ENCODE measurements at regions of chr5 and their contacts with region 1.

Region 1: DNA sequence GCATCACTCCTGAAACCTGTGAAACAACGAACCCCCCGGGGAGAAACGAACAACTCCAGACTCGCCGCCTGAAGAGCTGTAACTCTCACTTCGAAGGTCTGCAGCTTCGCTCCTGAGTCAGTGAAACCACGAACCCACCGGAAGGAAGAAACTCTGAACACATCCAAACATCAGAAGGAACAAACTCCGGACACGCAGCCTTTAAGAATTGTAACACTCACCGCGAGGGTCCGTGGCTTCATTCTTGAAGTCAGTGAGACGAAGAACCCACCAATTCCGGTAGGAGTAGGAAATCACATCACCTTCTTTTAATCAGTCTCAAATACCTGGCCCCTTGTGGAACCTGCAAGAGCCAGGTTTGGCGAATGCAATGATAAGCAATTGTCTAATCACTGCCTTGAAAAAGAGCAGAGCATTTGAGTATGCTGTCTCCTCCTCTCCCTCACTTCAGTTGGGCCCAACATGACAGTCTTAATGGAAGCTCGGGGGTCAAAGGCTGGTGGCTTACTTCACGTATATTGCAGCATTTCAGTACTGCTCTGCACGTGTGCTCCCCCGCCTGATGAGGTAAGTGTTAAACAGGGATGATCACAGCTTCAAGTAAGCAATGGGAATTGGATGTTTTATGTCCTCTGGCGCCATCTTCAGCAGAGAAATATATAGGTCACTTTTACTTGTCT is 473 bp downstream of the IRGM start:
- DNase-seq: peak; percentile 78 to 79
- H3K4me3 ChIP-seq: no peak overlapping the region
- H3K4me3 Mint-ChIP-seq: no peak overlapping the region
- H3K27ac Mint-ChIP-seq: no peak overlapping the region
- H3K4me1 ChIP-seq: peaks cover 5% of the 10 kb centered on the region; the same call in 1 of the 2 replicates
- H3K4me1 Mint-ChIP-seq: no peaks in the 10 kb centered on the region
- H3K27me3 ChIP-seq: no peaks in the 10 kb centered on the region
- H3K27me3 Mint-ChIP-seq: no peaks in the 10 kb centered on the region
- CTCF ChIP-seq: peak; percentile 65 to 74

Region 2: GRCh38 chr5:150458819-150459557 is 387.8 kb before region 1 on chr5:
- CTCF ChIA-PET with region 1: interaction called, 3 read pairs
- POLR2A ChIA-PET with region 1: no interaction called
- intact Hi-C with region 1: loop called (anchors 5 kb)
- DNase-seq: peak; percentile 90 to 95
- H3K4me3 ChIP-seq: no peak overlapping the region
- H3K4me3 Mint-ChIP-seq: peak overlapping the region; percentile 25
- H3K27ac Mint-ChIP-seq: peak overlapping the region; percentile 19
- H3K4me1 ChIP-seq: peaks cover 10% of the 10 kb centered on the region
- H3K4me1 Mint-ChIP-seq: peaks cover 15% of the 10 kb centered on the region
- H3K27me3 ChIP-seq: no peaks in the 10 kb centered on the region
- H3K27me3 Mint-ChIP-seq: no peaks in the 10 kb centered on the region
- CTCF ChIP-seq: peak; percentile 86 to 91

Region 3: DNA sequence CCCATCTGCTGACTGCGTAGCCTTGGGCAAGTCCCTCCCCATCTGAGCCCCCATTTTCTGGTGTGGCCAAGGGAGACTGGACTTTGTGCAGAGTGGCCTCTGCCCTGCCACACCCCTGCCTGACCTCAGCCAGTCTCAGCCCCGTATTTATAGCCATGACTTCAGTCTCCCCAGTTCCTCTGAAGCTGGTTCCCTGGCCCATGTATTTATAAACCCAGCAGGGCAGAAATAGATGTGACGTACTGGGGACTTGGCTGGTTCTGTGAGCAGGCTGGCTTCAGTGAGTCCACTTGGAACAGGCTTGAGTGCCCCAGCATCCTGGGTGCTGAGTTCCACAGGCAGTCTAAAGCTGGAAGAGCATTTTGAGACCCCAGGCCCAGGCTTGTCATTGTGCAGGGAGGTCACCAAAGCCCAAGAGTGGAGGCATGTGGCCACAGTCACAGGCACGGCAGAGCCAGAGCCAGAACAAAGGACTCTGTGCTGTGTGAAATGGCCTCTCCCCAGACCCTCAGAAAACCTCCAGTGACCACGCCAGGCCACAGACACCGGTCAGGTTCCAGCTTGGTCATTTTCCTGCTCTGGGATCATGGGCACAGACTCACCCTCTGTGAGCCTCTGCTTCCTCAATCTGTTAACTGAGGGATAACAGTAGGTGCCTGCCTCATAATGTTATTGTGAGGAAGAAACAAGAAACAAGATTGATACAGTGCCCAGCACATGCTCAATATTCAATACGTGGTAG is 236.8 kb before region 1 on chr5:
- CTCF ChIA-PET with region 1: no interaction called
- POLR2A ChIA-PET with region 1: no interaction called
- intact Hi-C with region 1: no loop called
- DNase-seq: peak; percentile 34 to 52
- H3K4me3 ChIP-seq: no peak overlapping the region
- H3K4me3 Mint-ChIP-seq: no peak overlapping the region
- H3K27ac Mint-ChIP-seq: no peak overlapping the region
- H3K4me1 ChIP-seq: peaks cover 32% of the 10 kb centered on the region
- H3K4me1 Mint-ChIP-seq: peaks cover 9% of the 10 kb centered on the region
- H3K27me3 ChIP-seq: no peaks in the 10 kb centered on the region
- H3K27me3 Mint-ChIP-seq: no peaks in the 10 kb centered on the region
- CTCF ChIP-seq: no peak

Region 4: GRCh38 chr5:150700594-150701293 is 146.1 kb before region 1 on chr5 and contains the start of gene RBM22:
- CTCF ChIA-PET with region 1: no interaction called
- POLR2A ChIA-PET with region 1: no interaction called
- intact Hi-C with region 1: loop called (anchors 2 kb)
- DNase-seq: peak; percentile 91 to 93
- H3K4me3 ChIP-seq: peak within 1 kb of the TSS; percentile 98
- H3K4me3 Mint-ChIP-seq: no peak within 1 kb of the TSS
- H3K27ac Mint-ChIP-seq: no peak within 1 kb of the TSS
- H3K4me1 ChIP-seq: no peaks in the 10 kb centered on the region
- H3K4me1 Mint-ChIP-seq: no peaks in the 10 kb centered on the region
- H3K27me3 ChIP-seq: no peaks in the 10 kb centered on the region
- H3K27me3 Mint-ChIP-seq: no peaks in the 10 kb centered on the region
- CTCF ChIP-seq: peak; percentile 57 to 72
- total RNA-seq, gene RBM22: 55.3 TPM in 2 replicates

Region 5: GRCh38 chr5:150778517-150779396 is 68.0 kb before region 1 on chr5 and contains the start of gene SMIM3:
- CTCF ChIA-PET with region 1: interaction called, 10 read pairs
- POLR2A ChIA-PET with region 1: no interaction called
- intact Hi-C with region 1: no loop called
- DNase-seq: peak; percentile 86 to 89
- H3K4me3 ChIP-seq: peak within 1 kb of the TSS; percentile 75
- H3K4me3 Mint-ChIP-seq: peak within 1 kb of the TSS; percentile 91
- H3K27ac Mint-ChIP-seq: peak within 1 kb of the TSS; percentile 80
- H3K4me1 ChIP-seq: peaks cover 34% of the 10 kb centered on the region
- H3K4me1 Mint-ChIP-seq: peaks cover 32% of the 10 kb centered on the region
- H3K27me3 ChIP-seq: no peaks in the 10 kb centered on the region
- H3K27me3 Mint-ChIP-seq: no peaks in the 10 kb centered on the region
- CTCF ChIP-seq: peak; percentile 35 to 83
- total RNA-seq, gene SMIM3: 19.2 and 19.4 TPM in 2 replicates

Region 6: GRCh38 chr5:150801117-150801927 is 45.5 kb before region 1 on chr5:
- CTCF ChIA-PET with region 1: interaction called, 63 read pairs
- POLR2A ChIA-PET with region 1: no interaction called
- intact Hi-C with region 1: loop called (anchors 1 kb)
- DNase-seq: peak in 1 of 2 experiments; percentile 76
- H3K4me3 ChIP-seq: peak overlapping the region; percentile 28
- H3K4me3 Mint-ChIP-seq: peak overlapping the region; percentile 76
- H3K27ac Mint-ChIP-seq: peak overlapping the region; percentile 69
- H3K4me1 ChIP-seq: 0 out of 2 replicates have a peak, but pooled peaks cover 6% of the 10 kb centered on the region
- H3K4me1 Mint-ChIP-seq: peaks cover 6% of the 10 kb centered on the region
- H3K27me3 ChIP-seq: no peaks in the 10 kb centered on the region
- H3K27me3 Mint-ChIP-seq: no peaks in the 10 kb centered on the region
- CTCF ChIP-seq: peak; percentile 61

Region 7: DNA sequence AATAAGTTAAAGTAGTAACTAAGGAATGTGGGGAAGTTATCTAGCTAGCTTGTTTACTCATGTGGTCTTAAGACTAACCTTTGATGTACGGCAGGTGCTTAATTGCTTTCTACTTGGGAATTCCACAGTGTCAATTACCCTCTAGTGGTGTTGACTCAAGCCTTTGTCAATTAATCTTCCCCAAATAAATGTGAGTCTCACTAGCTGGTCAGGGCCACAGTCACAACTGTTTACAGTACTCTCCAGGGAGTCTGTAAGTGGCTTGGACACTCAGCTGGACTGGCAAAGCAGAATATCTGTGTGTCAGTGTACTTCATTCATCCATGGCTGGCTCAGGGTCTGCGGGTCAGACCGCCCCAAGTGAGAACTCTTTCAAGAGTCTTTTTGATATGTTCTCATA is 37.4 kb before region 1 on chr5:
- CTCF ChIA-PET with region 1: interaction called, 5 read pairs
- POLR2A ChIA-PET with region 1: no interaction called
- intact Hi-C with region 1: loop called (anchors 2 kb)
- DNase-seq: peak; percentile 73 to 75
- H3K4me3 ChIP-seq: no peak overlapping the region
- H3K4me3 Mint-ChIP-seq: no peak overlapping the region
- H3K27ac Mint-ChIP-seq: peak overlapping the region; percentile 76
- H3K4me1 ChIP-seq: peaks cover 19% of the 10 kb centered on the region
- H3K4me1 Mint-ChIP-seq: peaks cover 19% of the 10 kb centered on the region
- H3K27me3 ChIP-seq: no peaks in the 10 kb centered on the region
- H3K27me3 Mint-ChIP-seq: no peaks in the 10 kb centered on the region
- CTCF ChIP-seq: no peak

Region 8: GRCh38 chr5:150836703-150837102 is 10.1 kb before region 1 on chr5:
- CTCF ChIA-PET with region 1: no interaction called
- POLR2A ChIA-PET with region 1: no interaction called
- intact Hi-C with region 1: no loop called
- DNase-seq: no peak
- H3K4me3 ChIP-seq: no peak overlapping the region
- H3K4me3 Mint-ChIP-seq: no peak overlapping the region
- H3K27ac Mint-ChIP-seq: no peak overlapping the region
- H3K4me1 ChIP-seq: no peaks in the 10 kb centered on the region
- H3K4me1 Mint-ChIP-seq: no peaks in the 10 kb centered on the region
- H3K27me3 ChIP-seq: no peaks in the 10 kb centered on the region; the same call in 1 of the 2 replicates
- H3K27me3 Mint-ChIP-seq: no peaks in the 10 kb centered on the region
- CTCF ChIP-seq: no peak

Region 9: DNA sequence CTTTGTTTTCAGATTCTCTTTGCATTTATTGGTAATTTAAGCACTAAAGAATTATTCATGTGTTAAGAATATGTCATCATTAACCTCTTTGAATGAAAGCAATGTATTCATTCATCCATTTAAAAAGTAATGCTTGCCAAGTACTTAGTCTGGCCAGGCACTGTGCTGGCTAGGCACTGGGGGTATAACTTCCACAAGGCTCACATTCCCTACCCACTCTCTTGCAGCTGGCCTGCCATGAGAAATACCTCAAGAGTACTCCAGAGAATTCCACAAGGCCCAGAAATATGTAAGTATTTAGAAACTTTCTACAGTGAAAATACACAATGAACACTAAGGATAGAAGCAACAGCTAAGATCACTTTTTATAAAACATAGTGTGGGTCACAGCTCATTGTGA is 32.6 kb after region 1 on chr5:
- CTCF ChIA-PET with region 1: no interaction called
- POLR2A ChIA-PET with region 1: no interaction called
- intact Hi-C with region 1: no loop called
- DNase-seq: no peak
- H3K4me3 ChIP-seq: no peak overlapping the region
- H3K4me3 Mint-ChIP-seq: no peak overlapping the region
- H3K27ac Mint-ChIP-seq: no peak overlapping the region
- H3K4me1 ChIP-seq: no peaks in the 10 kb centered on the region
- H3K4me1 Mint-ChIP-seq: no peaks in the 10 kb centered on the region
- H3K27me3 ChIP-seq: no peaks in the 10 kb centered on the region
- H3K27me3 Mint-ChIP-seq: no peaks in the 10 kb centered on the region
- CTCF ChIP-seq: no peak